ENCODE measurements at regions of chr13 and their contacts with region 1.

Region 1: DNA sequence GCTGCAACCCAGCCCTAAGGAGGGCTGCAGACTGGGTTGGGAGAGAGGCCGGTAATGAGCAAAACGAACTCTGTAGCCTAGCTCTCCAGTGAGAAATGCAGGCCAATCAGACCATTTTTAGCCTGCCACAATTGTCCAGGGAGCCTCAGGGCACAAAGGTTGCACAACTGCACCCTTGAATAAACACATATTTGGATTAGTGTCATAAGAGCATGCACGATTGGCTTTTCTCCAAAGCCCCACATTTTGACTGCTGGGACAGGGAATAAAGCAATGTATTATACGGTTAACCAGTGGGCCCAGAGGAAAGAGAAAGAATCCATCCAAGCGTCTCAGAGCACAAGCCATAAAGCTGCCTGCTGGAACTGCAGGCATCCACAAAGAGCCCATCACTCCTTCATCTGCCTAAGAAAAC is 729.4 kb upstream of the SGCG start:
- DNase-seq: peak in 3 of 5 donors; percentile 18 to 61 (median 27)
- ATAC-seq: peak; percentile 50 to 83 (median 74)
- H3K4me3 ChIP-seq: no peak overlapping the region
- H3K27ac ChIP-seq: peak overlapping the region in 5 of 12 donors; percentile 16 to 52 (median 20)
- H3K4me1 ChIP-seq: peaks cover 0 to 22% (median 4%) of the 10 kb centered on the region in 12 donors
- H3K27me3 ChIP-seq: no peaks in the 10 kb centered on the region
- CTCF ChIP-seq: no peak
- POLR2A ChIP-seq: no peak

Region 2: DNA sequence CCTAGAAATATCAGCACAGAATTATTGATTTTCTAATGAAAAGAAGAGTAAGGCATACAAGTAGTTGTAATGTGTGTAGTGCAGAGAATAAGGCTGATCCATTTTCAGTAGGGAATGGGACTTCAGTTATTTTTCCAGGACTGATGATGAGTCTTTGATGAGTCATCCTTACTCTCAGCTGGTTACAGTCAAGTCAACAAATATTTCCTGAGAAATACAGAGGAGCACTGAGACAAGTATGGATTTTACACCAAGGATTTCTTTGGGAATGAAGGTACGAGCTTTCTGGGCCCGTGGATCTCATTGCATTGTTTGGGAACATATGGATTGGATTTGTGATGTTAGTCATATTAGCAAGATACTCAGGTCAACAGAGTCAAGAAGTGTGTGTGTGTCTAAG is 277.7 kb before region 1 on chr13:
- intact Hi-C with region 1: loop called in 1 of 10 experiments (anchors 10 kb)
- DNase-seq: no peak
- ATAC-seq: peak in 1 of 4 donors; percentile 55
- H3K4me3 ChIP-seq: no peak overlapping the region
- H3K27ac ChIP-seq: no peak overlapping the region
- H3K4me1 ChIP-seq: no peaks in the 10 kb centered on the region
- H3K27me3 ChIP-seq: no peaks in the 10 kb centered on the region
- CTCF ChIP-seq: no peak
- POLR2A ChIP-seq: no peak

Region 3: GRCh38 chr13:22198001-22198400 is 253.3 kb before region 1 on chr13:
- intact Hi-C with region 1: loop called in 1 of 10 experiments (anchors 10 kb)
- DNase-seq: no peak
- ATAC-seq: peak; percentile 76 to 88 (median 86)
- H3K4me3 ChIP-seq: peak overlapping the region in 3 of 12 donors; percentile 11 to 17 (median 13)
- H3K27ac ChIP-seq: peak overlapping the region in 3 of 12 donors; percentile 2 to 37 (median 15)
- H3K4me1 ChIP-seq: peaks cover 0 to 21% (median 8%) of the 10 kb centered on the region in 12 donors
- H3K27me3 ChIP-seq: no peaks in the 10 kb centered on the region
- CTCF ChIP-seq: no peak
- POLR2A ChIP-seq: peak in 1 of 2 donors; percentile 9

Region 4: DNA sequence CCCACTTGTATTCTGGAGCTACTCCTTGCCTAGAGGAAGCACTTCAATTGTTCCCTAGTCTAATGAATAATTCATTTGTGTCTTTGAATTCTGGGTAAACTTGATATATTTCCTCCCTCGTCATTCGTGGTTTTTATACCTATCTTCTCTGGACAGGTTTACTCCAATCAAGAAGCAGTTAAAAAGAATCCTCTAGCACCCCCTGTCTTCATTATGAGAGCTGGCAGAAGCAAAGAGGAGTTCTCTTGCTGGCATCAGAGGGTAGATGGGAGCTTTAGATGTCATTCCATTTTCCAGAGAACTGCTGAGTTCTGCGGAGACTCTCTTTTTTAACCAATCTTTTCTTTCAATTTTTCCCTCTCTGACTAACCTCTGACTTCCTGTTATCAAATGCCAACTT is 152.8 kb before region 1 on chr13:
- intact Hi-C with region 1: loop called in 1 of 10 experiments (anchors 10 kb)
- DNase-seq: no peak
- ATAC-seq: no peak
- H3K4me3 ChIP-seq: no peak overlapping the region
- H3K27ac ChIP-seq: no peak overlapping the region
- H3K4me1 ChIP-seq: no peaks in the 10 kb centered on the region
- H3K27me3 ChIP-seq: no peaks in the 10 kb centered on the region
- CTCF ChIP-seq: no peak
- POLR2A ChIP-seq: no peak

Measured in heart left ventricle (tissue), 16 donors.